K562 (cell line): ENCODE measurements at regions of chr4 and their contacts with region 1.

Region 1: GRCh38 chr4:150573534-150573933 is 8.4 kb upstream of the MAB21L2 start:
- DNase-seq: no peak
- ATAC-seq: peak; percentile 20
- H3K4me3 ChIP-seq: 0 out of 2 replicates have a peak overlapping the region, but pooled peaks have one; percentile 4
- H3K27ac ChIP-seq: peak overlapping the region; percentile 91
- H3K4me1 ChIP-seq: peaks cover 0 to 60% of the 10 kb centered on the region in 2 experiments; a peak in 4 of 5 replicates
- H3K27me3 ChIP-seq: no peaks in the 10 kb centered on the region
- CTCF ChIP-seq: no peak
- EP300 ChIP-seq: no peak; the same call in 1 of the 2 replicates
- POLR2A ChIP-seq: no peak
- RAD21 ChIP-seq: no peak

Region 2: DNA sequence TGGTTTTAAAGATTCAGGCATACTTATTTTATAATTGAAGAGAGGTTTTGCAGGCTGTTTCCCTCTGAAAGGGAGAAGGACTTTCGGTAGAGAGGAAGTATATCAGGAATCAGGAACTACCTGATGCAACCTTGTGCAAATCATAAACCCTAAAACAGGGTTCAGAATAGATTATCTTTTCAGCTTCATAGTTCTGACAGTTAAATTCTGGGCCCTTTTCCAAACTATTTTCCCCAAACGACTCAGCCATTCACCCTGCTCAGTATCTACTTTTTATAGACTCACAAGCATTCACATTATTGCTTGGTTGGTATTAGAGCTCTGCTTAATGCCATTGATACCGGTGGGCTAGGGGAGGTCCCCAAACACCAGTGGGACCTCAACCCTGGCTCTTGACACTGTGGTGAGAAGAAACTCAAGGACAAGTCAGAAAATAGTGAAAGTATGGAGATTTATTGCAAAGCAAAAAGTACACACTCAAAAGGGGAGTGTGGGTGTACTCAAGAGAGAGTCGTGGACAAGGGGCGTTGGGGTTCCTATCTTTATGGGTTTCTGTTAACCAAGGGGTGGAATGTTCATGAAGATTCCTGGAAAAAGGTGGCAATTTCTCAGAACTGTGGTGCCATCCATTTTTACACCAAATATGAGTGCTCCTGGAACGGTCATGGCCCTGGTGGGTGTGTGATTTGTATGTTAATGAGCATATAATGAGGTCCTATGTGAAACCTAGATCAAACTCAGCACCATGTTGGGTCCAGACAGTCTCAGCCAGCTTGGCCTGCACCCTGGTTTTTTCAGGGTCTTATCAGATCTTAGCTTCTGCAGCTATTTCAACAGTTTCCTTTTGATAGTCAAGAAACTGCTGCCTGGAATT is 257.0 kb before region 1 on chr4:
- CTCF ChIA-PET with region 1: no interaction called
- POLR2A ChIA-PET with region 1: no interaction called
- in situ Hi-C with region 1: no loop called
- intact Hi-C with region 1: loop called (anchors 5 kb)
- DNase-seq: peak in 1 of 4 experiments; percentile 66
- ATAC-seq: peak; percentile 75
- H3K4me3 ChIP-seq: no peak overlapping the region
- H3K27ac ChIP-seq: peak overlapping the region; percentile 91
- H3K4me1 ChIP-seq: peaks cover 5 to 59% of the 10 kb centered on the region in 2 experiments
- H3K27me3 ChIP-seq: no peaks in the 10 kb centered on the region
- CTCF ChIP-seq: no peak
- EP300 ChIP-seq: peak; percentile 98
- POLR2A ChIP-seq: no peak
- RAD21 ChIP-seq: peak in 1 of 2 experiments; percentile 15; a peak in 2 of 4 replicates